A673 (cell line): ENCODE measurements at regions of chr15 and their contacts with region 1.

Region 1: GRCh38 chr15:37872661-37873060 is 61.8 kb upstream of the TMCO5A start:
- DNase-seq: peak; percentile 23
- H3K4me3 ChIP-seq: no peak overlapping the region
- H3K27ac ChIP-seq: no peak overlapping the region
- H3K4me1 ChIP-seq: peaks cover 14% of the 10 kb centered on the region
- H3K27me3 ChIP-seq: no peaks in the 10 kb centered on the region
- CTCF ChIP-seq: no peak

Region 2: GRCh38 chr15:37764733-37765191 is 107.9 kb before region 1 on chr15:
- CTCF ChIA-PET with region 1: no interaction called
- POLR2A ChIA-PET with region 1: no interaction called
- intact Hi-C with region 1: loop called (anchors 5 kb)
- DNase-seq: peak; percentile 90
- H3K4me3 ChIP-seq: peak overlapping the region; percentile 6
- H3K27ac ChIP-seq: peak overlapping the region; percentile 74
- H3K4me1 ChIP-seq: peaks cover 21% of the 10 kb centered on the region
- H3K27me3 ChIP-seq: no peaks in the 10 kb centered on the region
- CTCF ChIP-seq: peak; percentile 86